ENCODE measurements at regions of chr12 and their contacts with region 1.

Region 1: DNA sequence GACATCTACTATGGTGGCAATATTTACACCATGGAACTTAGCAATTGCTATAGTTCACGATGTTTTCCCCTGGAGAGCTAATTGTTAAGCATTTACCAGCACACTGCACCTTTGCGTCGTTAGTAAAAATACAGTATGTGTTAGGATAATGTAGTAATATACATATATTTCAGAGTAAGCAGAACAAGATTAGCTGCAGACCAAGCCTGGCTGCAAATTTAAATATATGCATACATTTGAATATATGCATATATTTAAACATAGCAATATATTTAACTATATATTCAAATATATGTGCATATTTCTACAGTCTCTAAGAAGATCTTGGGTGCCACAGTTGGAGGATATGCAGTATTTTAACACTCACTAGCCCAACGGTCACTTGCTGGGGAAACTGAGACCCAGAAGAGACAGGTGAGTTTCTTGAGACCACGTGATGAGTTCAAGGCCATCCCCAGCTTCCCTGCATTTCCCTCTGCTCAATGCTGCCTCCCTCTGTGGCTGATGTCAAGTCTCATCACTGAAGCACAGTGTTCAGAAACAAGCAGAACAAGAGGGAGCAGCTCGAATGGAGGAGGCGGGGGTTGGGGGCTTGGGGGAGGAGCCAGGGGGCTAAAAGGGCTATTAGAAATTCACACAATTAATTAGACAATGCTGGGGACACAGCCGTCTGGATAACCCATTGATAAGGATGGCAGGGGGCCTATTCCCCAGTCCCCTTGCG is 708.0 kb downstream of the MED13L start:
- DNase-seq: no peak
- H3K4me3 ChIP-seq: no peak overlapping the region
- H3K27ac ChIP-seq: no peak overlapping the region
- H3K4me1 ChIP-seq: no peaks in the 10 kb centered on the region
- H3K27me3 ChIP-seq: no peaks in the 10 kb centered on the region
- CTCF ChIP-seq: no peak
- POLR2A ChIP-seq: no peak

Region 2: GRCh38 chr12:114726092-114726710 is 843.3 kb before region 1 on chr12:
- intact Hi-C with region 1: loop called (anchors 2 kb)
- DNase-seq: no peak
- H3K4me3 ChIP-seq: no peak overlapping the region
- H3K27ac ChIP-seq: no peak overlapping the region
- H3K4me1 ChIP-seq: no peaks in the 10 kb centered on the region
- H3K27me3 ChIP-seq: no peaks in the 10 kb centered on the region
- CTCF ChIP-seq: no peak
- POLR2A ChIP-seq: no peak

Region 3: DNA sequence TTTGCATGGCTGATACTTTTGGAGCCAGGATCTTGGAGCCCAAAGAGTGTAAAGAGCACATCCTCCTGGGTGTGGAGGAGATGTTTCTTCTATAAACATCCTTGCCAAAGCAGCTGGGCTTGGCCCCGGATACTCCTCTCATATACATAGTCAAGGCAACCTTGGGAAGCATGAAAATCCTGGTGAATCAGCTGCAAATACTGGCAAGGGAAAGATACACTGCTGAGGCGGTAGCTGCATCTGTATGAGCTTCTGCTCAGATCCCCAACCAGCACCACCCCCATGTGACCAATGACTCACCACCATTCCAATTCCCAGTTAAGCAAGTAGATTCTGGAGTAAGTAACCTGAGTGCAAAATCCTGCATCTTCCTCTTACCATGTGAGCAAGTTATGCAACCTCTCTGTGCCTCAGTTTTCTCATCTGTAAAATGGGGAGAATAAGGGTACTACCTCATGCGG is 140.6 kb after region 1 on chr12:
- intact Hi-C with region 1: loop called (anchors 10 kb)
- DNase-seq: peak; percentile 19 to 32
- H3K4me3 ChIP-seq: no peak overlapping the region
- H3K27ac ChIP-seq: no peak overlapping the region
- H3K4me1 ChIP-seq: no peaks in the 10 kb centered on the region
- H3K27me3 ChIP-seq: no peaks in the 10 kb centered on the region
- CTCF ChIP-seq: no peak
- POLR2A ChIP-seq: no peak

Measured in uterus (tissue), 4 donors.